Transverse colon (tissue), 4 donors: ENCODE measurements at regions of chr19 and their contacts with region 1.

Region 1: GRCh38 chr19:23686621-23687423 is at the start of gene ZNF675:
- DNase-seq: peak; percentile 93
- H3K4me3 ChIP-seq: peak within 1 kb of the TSS; percentile 59 to 92 (median 60)
- H3K27ac ChIP-seq: peak within 1 kb of the TSS; percentile 87 to 93 (median 90)
- H3K4me1 ChIP-seq: peaks cover 0 to 16% (median 7%) of the 10 kb centered on the region in 4 donors
- H3K27me3 ChIP-seq: no peaks in the 10 kb centered on the region
- CTCF ChIP-seq: no peak
- EP300 ChIP-seq: no peak
- POLR2A ChIP-seq: peak; percentile 56
- total RNA-seq, gene ZNF675: 2.2 to 18.3 (median 14.7) TPM

Region 2: DNA sequence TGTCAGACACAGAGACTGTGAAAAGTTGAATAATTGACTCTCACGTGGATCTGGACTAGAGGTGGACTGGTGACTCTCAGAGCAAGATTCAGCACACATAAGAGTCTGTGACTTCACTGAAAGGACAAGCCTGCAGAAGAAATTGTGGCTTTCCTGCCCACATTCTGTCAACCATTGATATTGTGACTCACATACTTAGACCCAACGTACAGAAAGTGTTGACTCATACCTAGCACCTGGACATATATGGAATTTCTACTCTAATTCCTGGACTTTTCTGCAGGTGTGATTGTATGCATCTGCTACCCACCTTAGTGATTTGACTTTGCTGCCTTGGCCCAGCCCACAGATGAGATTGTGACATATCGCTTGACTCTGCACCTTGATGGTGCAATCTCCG is 585.6 kb before region 1 on chr19:
- in situ Hi-C with region 1: no loop called
- intact Hi-C with region 1: no loop called
- DNase-seq: no peak
- H3K4me3 ChIP-seq: no peak overlapping the region
- H3K27ac ChIP-seq: no peak overlapping the region
- H3K4me1 ChIP-seq: no peaks in the 10 kb centered on the region
- H3K27me3 ChIP-seq: no peaks in the 10 kb centered on the region
- CTCF ChIP-seq: no peak
- EP300 ChIP-seq: no peak
- POLR2A ChIP-seq: no peak

Region 3: GRCh38 chr19:23249911-23250649 is 436.7 kb before region 1 on chr19 and contains the start of gene ZNF724:
- in situ Hi-C with region 1: loop called in 1 of 4 experiments (anchors 25 kb)
- intact Hi-C with region 1: no loop called
- DNase-seq: peak; percentile 94
- H3K4me3 ChIP-seq: peak within 1 kb of the TSS; percentile 56 to 67 (median 60)
- H3K27ac ChIP-seq: peak within 1 kb of the TSS; percentile 80 to 85 (median 83)
- H3K4me1 ChIP-seq: peaks cover 0 to 13% (median 5%) of the 10 kb centered on the region in 4 donors
- H3K27me3 ChIP-seq: no peaks in the 10 kb centered on the region
- CTCF ChIP-seq: no peak
- EP300 ChIP-seq: no peak
- POLR2A ChIP-seq: peak; percentile 69
- total RNA-seq, gene ZNF724: 1.8 to 4.9 (median 3.6) TPM

Region 4: DNA sequence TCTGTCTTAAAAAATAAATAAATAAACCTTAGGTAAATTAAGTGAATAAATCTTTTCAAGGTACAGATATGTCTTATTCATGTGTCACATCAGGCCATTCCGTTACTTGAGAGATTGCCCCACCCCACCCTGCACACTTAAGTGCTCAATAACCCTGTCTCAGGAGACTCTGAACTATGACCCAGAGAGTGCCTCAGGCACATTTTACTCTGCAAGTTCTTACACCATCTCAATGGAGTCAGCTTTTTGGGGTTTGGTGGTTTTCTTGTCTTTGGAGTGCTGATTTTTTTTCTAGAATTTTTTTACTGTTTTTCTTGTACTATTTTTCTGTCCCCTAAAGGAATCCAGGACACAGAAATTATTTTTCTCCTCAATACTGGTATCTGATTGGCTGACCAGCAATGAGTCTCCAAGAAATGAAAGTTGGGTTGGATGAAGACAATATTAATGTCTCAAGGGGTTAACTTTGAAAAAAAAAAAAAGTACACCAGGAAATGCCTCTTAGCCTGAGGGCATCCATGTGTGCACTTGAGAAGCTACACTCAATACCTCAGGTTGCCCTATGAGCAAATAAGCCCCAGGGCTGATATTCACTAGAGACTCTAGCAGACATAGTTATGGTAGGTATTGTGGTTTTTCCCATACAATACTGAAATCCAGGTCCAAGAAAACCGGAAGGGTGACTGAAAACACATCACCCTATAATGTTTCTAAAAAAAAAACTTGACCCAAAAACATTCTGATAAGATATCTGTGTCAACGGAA is 177.0 kb before region 1 on chr19:
- in situ Hi-C with region 1: no loop called
- intact Hi-C with region 1: no loop called
- DNase-seq: no peak
- H3K4me3 ChIP-seq: no peak overlapping the region
- H3K27ac ChIP-seq: no peak overlapping the region
- H3K4me1 ChIP-seq: no peaks in the 10 kb centered on the region
- H3K27me3 ChIP-seq: no peaks in the 10 kb centered on the region
- CTCF ChIP-seq: no peak
- EP300 ChIP-seq: no peak
- POLR2A ChIP-seq: no peak